ENCODE measurements at regions of chr2 and their contacts with region 1.

Region 1: GRCh38 chr2:120312861-120313694 is 32.9 kb upstream of the INHBB start:
- DNase-seq: peak; percentile 56 to 65 (median 61)
- H3K4me3 ChIP-seq: peak overlapping the region; percentile 15 to 48
- H3K4me3 Mint-ChIP-seq: peak overlapping the region; percentile 66 to 91 (median 84)
- H3K27ac ChIP-seq: no peak overlapping the region
- H3K27ac Mint-ChIP-seq: peak overlapping the region in 6 of 7 donors; percentile 32 to 78 (median 62)
- H3K4me1 ChIP-seq: peaks cover 19% of the 10 kb centered on the region
- H3K4me1 Mint-ChIP-seq: peaks cover 11 to 29% (median 21%) of the 10 kb centered on the region in 4 donors
- H3K27me3 ChIP-seq: no peaks in the 10 kb centered on the region
- H3K27me3 Mint-ChIP-seq: peaks cover 0 to 4% of the 10 kb centered on the region in 2 donors

Region 2: GRCh38 chr2:119641562-119642258 is 671.4 kb before region 1 on chr2:
- CTCF ChIA-PET with region 1: interaction called, 5 read pairs
- POLR2A ChIA-PET with region 1: no interaction called
- intact Hi-C with region 1: loop called (anchors 5 kb)
- DNase-seq: peak; percentile 56 to 62 (median 60)
- H3K4me3 ChIP-seq: no peak overlapping the region
- H3K4me3 Mint-ChIP-seq: no peak overlapping the region
- H3K27ac ChIP-seq: no peak overlapping the region
- H3K27ac Mint-ChIP-seq: peak overlapping the region in 1 of 7 donors; percentile 37
- H3K4me1 ChIP-seq: no peaks in the 10 kb centered on the region
- H3K4me1 Mint-ChIP-seq: peaks cover 0 to 7% (median 3%) of the 10 kb centered on the region in 4 donors
- H3K27me3 ChIP-seq: no peaks in the 10 kb centered on the region
- H3K27me3 Mint-ChIP-seq: peaks cover 0 to 13% of the 10 kb centered on the region in 2 donors

Region 3: DNA sequence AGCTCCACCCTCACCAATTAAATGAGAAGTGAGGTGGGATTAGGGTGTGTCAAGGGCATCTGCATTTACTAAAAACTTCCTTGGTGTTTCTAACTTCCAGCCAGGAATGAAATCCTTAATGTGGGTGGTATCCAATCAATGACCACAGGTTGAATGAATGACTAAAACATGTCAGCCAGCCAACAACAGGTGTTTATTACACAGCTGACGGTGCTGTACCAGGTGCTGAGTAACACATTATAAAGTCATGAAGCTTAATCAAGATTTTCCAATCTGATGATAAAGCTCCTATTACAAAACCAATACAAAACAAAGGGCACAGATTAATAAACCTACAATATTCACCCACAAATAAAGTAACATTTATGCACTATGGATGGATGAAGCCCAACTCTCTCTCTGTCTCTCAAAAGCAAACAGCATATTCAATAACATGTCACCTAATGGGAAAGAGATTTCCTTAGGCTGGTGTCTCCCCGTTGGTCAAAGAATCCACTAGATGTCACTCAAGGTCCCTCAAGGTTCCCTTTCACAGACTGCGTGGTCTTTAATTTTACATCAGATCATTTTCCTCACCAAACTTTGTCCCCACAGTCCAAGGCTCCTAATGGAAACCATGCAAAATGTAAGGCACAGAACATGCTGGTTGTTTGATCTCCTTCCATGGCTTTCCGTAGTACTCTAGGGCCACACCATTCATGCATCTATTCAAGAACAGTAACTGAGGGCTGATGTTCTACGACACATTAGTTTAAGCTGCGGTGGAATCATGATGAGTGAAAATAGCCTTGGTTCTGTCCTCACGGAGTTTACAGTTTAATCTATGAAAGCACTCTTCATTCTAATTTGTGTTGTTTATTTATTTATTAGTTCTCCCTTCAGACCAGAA is 559.8 kb before region 1 on chr2:
- CTCF ChIA-PET with region 1: interaction called, 8 read pairs
- POLR2A ChIA-PET with region 1: no interaction called
- intact Hi-C with region 1: loop called (anchors 2 kb)
- DNase-seq: peak in 4 of 5 donors; percentile 47 to 58 (median 56)
- H3K4me3 ChIP-seq: no peak overlapping the region
- H3K4me3 Mint-ChIP-seq: no peak overlapping the region
- H3K27ac ChIP-seq: no peak overlapping the region
- H3K27ac Mint-ChIP-seq: no peak overlapping the region
- H3K4me1 ChIP-seq: no peaks in the 10 kb centered on the region
- H3K4me1 Mint-ChIP-seq: peaks cover under 1 to 5% (median 4%) of the 10 kb centered on the region in 4 donors
- H3K27me3 ChIP-seq: no peaks in the 10 kb centered on the region
- H3K27me3 Mint-ChIP-seq: no peaks in the 10 kb centered on the region

Region 4: GRCh38 chr2:119996148-119996547 is 316.9 kb before region 1 on chr2:
- CTCF ChIA-PET with region 1: no interaction called
- POLR2A ChIA-PET with region 1: no interaction called
- intact Hi-C with region 1: no loop called
- DNase-seq: no peak
- H3K4me3 ChIP-seq: no peak overlapping the region
- H3K4me3 Mint-ChIP-seq: no peak overlapping the region
- H3K27ac ChIP-seq: no peak overlapping the region
- H3K27ac Mint-ChIP-seq: no peak overlapping the region
- H3K4me1 ChIP-seq: no peaks in the 10 kb centered on the region
- H3K4me1 Mint-ChIP-seq: no peaks in the 10 kb centered on the region
- H3K27me3 ChIP-seq: no peaks in the 10 kb centered on the region
- H3K27me3 Mint-ChIP-seq: peaks cover 0 to under 1% of the 10 kb centered on the region in 2 donors

Region 5: GRCh38 chr2:120053891-120054290 is 259.2 kb before region 1 on chr2:
- CTCF ChIA-PET with region 1: no interaction called
- POLR2A ChIA-PET with region 1: no interaction called
- intact Hi-C with region 1: no loop called
- DNase-seq: no peak
- H3K4me3 ChIP-seq: no peak overlapping the region
- H3K4me3 Mint-ChIP-seq: no peak overlapping the region
- H3K27ac ChIP-seq: no peak overlapping the region
- H3K27ac Mint-ChIP-seq: no peak overlapping the region
- H3K4me1 ChIP-seq: no peaks in the 10 kb centered on the region
- H3K4me1 Mint-ChIP-seq: no peaks in the 10 kb centered on the region
- H3K27me3 ChIP-seq: no peaks in the 10 kb centered on the region
- H3K27me3 Mint-ChIP-seq: no peaks in the 10 kb centered on the region

Region 6: GRCh38 chr2:120109186-120110061 is 203.7 kb before region 1 on chr2:
- CTCF ChIA-PET with region 1: interaction called, 83 read pairs
- POLR2A ChIA-PET with region 1: interaction called, 7 read pairs
- intact Hi-C with region 1: loop called (anchors 1 kb)
- DNase-seq: peak in 4 of 5 donors; percentile 49 to 64 (median 56)
- H3K4me3 ChIP-seq: peak overlapping the region in 1 of 2 donors; percentile 25
- H3K4me3 Mint-ChIP-seq: peak overlapping the region; percentile 49 to 89 (median 80)
- H3K27ac ChIP-seq: peak overlapping the region; percentile 23
- H3K27ac Mint-ChIP-seq: peak overlapping the region in 6 of 7 donors; percentile 45 to 91 (median 64)
- H3K4me1 ChIP-seq: peaks cover 23% of the 10 kb centered on the region
- H3K4me1 Mint-ChIP-seq: peaks cover 18 to 24% (median 21%) of the 10 kb centered on the region in 4 donors
- H3K27me3 ChIP-seq: no peaks in the 10 kb centered on the region
- H3K27me3 Mint-ChIP-seq: peaks cover 0 to 1% of the 10 kb centered on the region in 2 donors

Region 7: GRCh38 chr2:120231974-120232635 is 81.0 kb before region 1 on chr2:
- CTCF ChIA-PET with region 1: interaction called, 12 read pairs
- POLR2A ChIA-PET with region 1: interaction called, 8 read pairs
- intact Hi-C with region 1: loop called (anchors 1 kb)
- DNase-seq: peak; percentile 75 to 83 (median 79)
- H3K4me3 ChIP-seq: peak overlapping the region; percentile 69 to 91
- H3K4me3 Mint-ChIP-seq: peak overlapping the region; percentile 91 to 99 (median 92)
- H3K27ac ChIP-seq: peak overlapping the region; percentile 79
- H3K27ac Mint-ChIP-seq: peak overlapping the region; percentile 91 to 99 (median 96)
- H3K4me1 ChIP-seq: peaks cover 46% of the 10 kb centered on the region
- H3K4me1 Mint-ChIP-seq: peaks cover 27 to 61% (median 42%) of the 10 kb centered on the region in 4 donors
- H3K27me3 ChIP-seq: no peaks in the 10 kb centered on the region
- H3K27me3 Mint-ChIP-seq: no peaks in the 10 kb centered on the region